ENCODE measurements at regions of chr14 and their contacts with region 1.

Region 1: DNA sequence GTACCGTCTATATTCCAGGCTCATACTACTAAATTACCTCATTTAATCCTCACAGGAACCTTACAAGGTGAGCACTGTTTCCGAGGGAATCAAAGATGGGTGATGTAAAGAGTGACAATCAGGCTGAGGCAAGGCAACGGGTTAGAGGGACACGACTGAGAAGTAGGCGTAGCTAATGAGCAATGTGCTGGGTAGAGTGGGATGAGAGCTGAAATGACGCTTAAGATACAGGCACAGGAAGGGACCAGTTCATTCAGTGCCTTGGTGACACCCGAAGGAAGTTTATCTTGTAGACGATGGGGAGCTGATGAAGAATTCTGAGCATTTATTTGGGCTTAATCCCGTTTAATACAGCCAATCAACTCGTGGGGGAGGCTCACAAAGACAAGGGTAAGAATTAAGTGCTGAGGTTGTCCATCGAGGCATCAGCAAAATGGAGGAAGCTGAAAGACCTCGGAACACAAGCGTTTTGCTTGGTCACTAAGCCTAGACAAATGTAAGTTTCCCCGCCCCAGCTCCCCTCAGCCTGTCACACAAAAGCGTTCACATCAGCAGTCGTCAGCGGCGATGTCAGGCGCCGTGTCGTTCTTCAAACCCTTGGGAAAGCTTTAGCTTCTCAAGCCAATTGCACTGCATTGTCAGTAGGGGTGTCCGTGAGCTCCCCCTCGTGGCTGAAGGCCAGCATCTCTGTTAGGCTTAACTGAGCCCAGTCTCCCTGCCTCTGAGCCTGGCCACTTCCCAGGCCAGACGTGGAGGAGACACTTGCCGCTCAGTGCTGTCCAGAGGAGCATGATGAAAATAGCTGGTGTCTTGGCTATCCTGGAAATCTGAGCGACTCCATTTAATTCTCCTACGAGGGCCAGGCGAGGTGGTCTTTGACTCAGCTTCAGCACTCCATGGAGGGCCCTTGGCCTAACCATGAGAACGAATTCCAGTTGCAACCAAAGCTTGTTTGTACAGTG is 288.5 kb upstream of the G2E3 start:
- DNase-seq: peak; percentile 69 to 81 (median 79)
- H3K4me3 ChIP-seq: peak overlapping the region in 3 of 7 experiments; percentile 38 to 68 (median 40)
- H3K27ac ChIP-seq: no peak overlapping the region
- H3K4me1 ChIP-seq: peaks cover 0 to 8% (median 2%) of the 10 kb centered on the region in 4 experiments
- H3K27me3 ChIP-seq: peaks cover 0 to 6% (median 2%) of the 10 kb centered on the region in 5 experiments

Region 2: GRCh38 chr14:30223385-30223813 is 47.1 kb before region 1 on chr14:
- CTCF ChIA-PET with region 1: no interaction called
- POLR2A ChIA-PET with region 1: no interaction called
- DNase-seq: no peak
- H3K4me3 ChIP-seq: no peak overlapping the region
- H3K27ac ChIP-seq: no peak overlapping the region
- H3K4me1 ChIP-seq: no peaks in the 10 kb centered on the region
- H3K27me3 ChIP-seq: peaks cover 0 to 1% (median 0%) of the 10 kb centered on the region in 5 experiments

Region 3: DNA sequence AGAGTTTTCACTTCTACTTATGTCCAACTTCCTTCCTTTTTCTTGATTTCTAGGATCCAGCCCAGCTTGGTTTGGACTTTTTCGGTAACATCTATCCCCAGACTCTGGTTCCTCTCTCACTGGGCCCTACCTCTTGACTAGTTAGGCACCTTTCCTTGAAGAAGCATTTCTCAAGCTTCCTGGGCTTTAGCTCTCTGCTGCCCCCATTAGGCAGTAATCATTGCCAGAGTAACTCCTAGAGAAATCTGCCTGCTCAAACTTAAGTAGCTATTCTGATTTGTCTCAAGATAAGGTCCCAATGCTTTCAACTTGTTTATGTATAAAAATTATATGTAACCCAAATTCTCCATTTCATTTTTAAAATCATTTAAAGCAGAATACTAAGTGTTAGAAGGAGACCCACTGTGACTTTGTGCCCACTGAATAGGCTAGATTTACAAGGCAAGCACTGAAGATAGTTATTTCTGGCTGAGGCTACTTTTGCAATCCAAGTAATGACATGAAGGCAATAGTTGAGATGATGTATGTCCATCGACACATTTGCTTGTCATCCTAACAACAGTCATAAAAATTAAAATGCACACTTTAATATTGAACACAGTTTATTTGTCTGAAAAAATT is 13.5 kb after region 1 on chr14:
- CTCF ChIA-PET with region 1: interaction called, 12 read pairs
- POLR2A ChIA-PET with region 1: no interaction called
- DNase-seq: peak; percentile 16 to 39 (median 33)
- H3K4me3 ChIP-seq: no peak overlapping the region
- H3K27ac ChIP-seq: no peak overlapping the region
- H3K4me1 ChIP-seq: no peaks in the 10 kb centered on the region
- H3K27me3 ChIP-seq: no peaks in the 10 kb centered on the region

Measured in common myeloid progenitor, CD34-positive (primary cell).